ENCODE measurements at regions of chr18 and their contacts with region 1.

Region 1: GRCh38 chr18:69008538-69008937 is 210.7 kb downstream of the CCDC102B start:
- DNase-seq: no peak
- H3K4me3 ChIP-seq: no peak overlapping the region
- H3K27ac ChIP-seq: no peak overlapping the region
- H3K4me1 ChIP-seq: no peaks in the 10 kb centered on the region
- H3K27me3 ChIP-seq: no peaks in the 10 kb centered on the region
- CTCF ChIP-seq: no peak

Region 2: DNA sequence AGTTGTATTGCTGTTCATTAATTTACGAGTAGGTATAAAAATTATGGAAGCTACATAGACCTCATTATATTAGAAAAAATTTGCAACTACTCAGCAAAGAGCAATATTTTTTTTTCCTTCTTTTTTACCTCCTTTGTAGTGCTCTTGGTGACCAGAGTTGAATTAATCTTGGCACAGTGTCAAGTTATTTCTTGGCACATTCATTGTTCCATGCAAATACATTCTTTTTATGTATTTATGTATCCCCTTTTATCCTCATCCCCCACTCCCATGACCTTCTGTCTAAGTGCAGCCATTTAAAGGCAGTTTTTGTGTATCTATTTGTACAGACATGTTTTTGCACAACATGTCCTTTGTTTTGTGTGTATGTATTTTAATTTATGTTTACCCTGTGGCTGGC is 13.9 kb after region 1 on chr18:
- CTCF ChIA-PET with region 1: interaction called, 12 read pairs
- POLR2A ChIA-PET with region 1: no interaction called
- intact Hi-C with region 1: no loop called
- DNase-seq: no peak
- H3K4me3 ChIP-seq: no peak overlapping the region
- H3K27ac ChIP-seq: no peak overlapping the region
- H3K4me1 ChIP-seq: peaks cover 5% of the 10 kb centered on the region
- H3K27me3 ChIP-seq: no peaks in the 10 kb centered on the region
- CTCF ChIP-seq: no peak

Measured in A673 (cell line).